ENCODE measurements at regions of chr5 and their contacts with region 1.

Region 1: GRCh38 chr5:80686757-80687156 is 32.0 kb upstream of the DHFR start:
- DNase-seq: no peak
- ATAC-seq: no peak
- H3K4me3 ChIP-seq: no peak overlapping the region
- H3K27ac ChIP-seq: no peak overlapping the region
- H3K4me1 ChIP-seq: no peaks in the 10 kb centered on the region
- H3K27me3 ChIP-seq: no peaks in the 10 kb centered on the region
- CTCF ChIP-seq: peak in 11 of 12 donors; percentile 17 to 53 (median 33)
- POLR2A ChIP-seq: no peak

Region 2: DNA sequence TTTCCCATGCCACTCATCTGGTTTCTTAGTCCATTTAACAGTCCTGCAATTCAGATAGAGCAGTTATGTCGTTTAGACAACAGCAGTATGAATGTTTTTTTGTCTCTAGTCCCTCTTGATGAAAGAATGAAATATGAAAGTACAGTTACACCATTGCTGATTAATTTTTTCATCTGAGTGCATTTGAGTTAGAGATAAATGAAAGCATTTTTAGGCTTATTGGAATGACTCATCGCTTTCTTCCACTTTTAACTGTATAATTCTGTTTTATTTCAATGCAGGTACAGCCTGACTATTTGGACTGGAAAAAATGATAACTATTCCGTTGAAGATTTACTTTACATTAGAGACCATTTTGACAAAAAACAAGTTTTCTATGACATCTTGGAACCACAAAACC is 145.4 kb before region 1 on chr5:
- intact Hi-C with region 1: no loop called
- DNase-seq: no peak
- ATAC-seq: no peak
- H3K4me3 ChIP-seq: no peak overlapping the region
- H3K27ac ChIP-seq: no peak overlapping the region
- H3K4me1 ChIP-seq: no peaks in the 10 kb centered on the region
- H3K27me3 ChIP-seq: no peaks in the 10 kb centered on the region
- CTCF ChIP-seq: no peak
- POLR2A ChIP-seq: no peak

Region 3: GRCh38 chr5:81187885-81188284 is 501.1 kb after region 1 on chr5:
- intact Hi-C with region 1: loop called in 7 of 10 experiments (anchors 5 to 10 kb)
- DNase-seq: peak; percentile 60 to 79 (median 76)
- ATAC-seq: peak in 3 of 4 donors; percentile 68 to 83 (median 79)
- H3K4me3 ChIP-seq: no peak overlapping the region
- H3K27ac ChIP-seq: peak overlapping the region in 8 of 12 donors; percentile 30 to 67 (median 38)
- H3K4me1 ChIP-seq: peaks cover 0 to 17% (median 1%) of the 10 kb centered on the region in 12 donors
- H3K27me3 ChIP-seq: no peaks in the 10 kb centered on the region
- CTCF ChIP-seq: no peak
- POLR2A ChIP-seq: no peak